PC-9 (cell line): ENCODE measurements at regions of chr22 and their contacts with region 1.

Region 1: GRCh38 chr22:36065775-36066559 is 37.3 kb upstream of the RBFOX2 start:
- DNase-seq: peak; percentile 88 to 95
- H3K4me3 ChIP-seq: peak overlapping the region; percentile 76
- H3K27ac ChIP-seq: peak overlapping the region; percentile 71
- H3K4me1 ChIP-seq: peaks cover 12% of the 10 kb centered on the region
- H3K27me3 ChIP-seq: no peaks in the 10 kb centered on the region
- CTCF ChIP-seq: peak; percentile 100

Region 2: DNA sequence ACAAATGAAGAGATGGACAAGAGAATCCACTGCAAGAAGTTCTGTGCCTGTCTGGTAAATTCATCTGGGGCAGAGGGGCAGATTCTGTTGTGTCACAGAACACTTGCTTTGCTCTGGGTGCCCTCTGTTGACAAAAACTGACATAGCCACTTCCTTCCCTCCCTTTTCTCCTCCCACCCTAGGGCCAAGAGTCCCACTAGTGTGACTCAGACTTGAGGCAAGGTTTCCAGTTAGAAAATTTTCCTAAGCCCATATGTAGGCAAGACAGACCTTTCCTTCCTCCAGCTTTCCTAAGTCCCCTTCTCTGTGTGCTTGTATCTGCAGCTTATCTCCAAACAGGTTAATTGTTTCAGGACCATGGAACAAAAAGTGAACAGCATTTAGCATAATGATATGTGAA is 144.2 kb before region 1 on chr22:
- CTCF ChIA-PET with region 1: interaction called, 11 read pairs
- POLR2A ChIA-PET with region 1: no interaction called
- intact Hi-C with region 1: no loop called
- DNase-seq: peak; percentile 77 to 86
- H3K4me3 ChIP-seq: no peak overlapping the region
- H3K27ac ChIP-seq: peak overlapping the region; percentile 71
- H3K4me1 ChIP-seq: peaks cover 30% of the 10 kb centered on the region
- H3K27me3 ChIP-seq: no peaks in the 10 kb centered on the region
- CTCF ChIP-seq: peak; percentile 72

Region 3: GRCh38 chr22:35930933-35931332 is 135.0 kb before region 1 on chr22:
- CTCF ChIA-PET with region 1: interaction called, 10 read pairs
- POLR2A ChIA-PET with region 1: no interaction called
- intact Hi-C with region 1: loop called (anchors 1 kb)
- DNase-seq: peak; percentile 3 to 48
- H3K4me3 ChIP-seq: no peak overlapping the region
- H3K27ac ChIP-seq: no peak overlapping the region
- H3K4me1 ChIP-seq: no peaks in the 10 kb centered on the region
- H3K27me3 ChIP-seq: no peaks in the 10 kb centered on the region
- CTCF ChIP-seq: peak; percentile 73

Region 4: DNA sequence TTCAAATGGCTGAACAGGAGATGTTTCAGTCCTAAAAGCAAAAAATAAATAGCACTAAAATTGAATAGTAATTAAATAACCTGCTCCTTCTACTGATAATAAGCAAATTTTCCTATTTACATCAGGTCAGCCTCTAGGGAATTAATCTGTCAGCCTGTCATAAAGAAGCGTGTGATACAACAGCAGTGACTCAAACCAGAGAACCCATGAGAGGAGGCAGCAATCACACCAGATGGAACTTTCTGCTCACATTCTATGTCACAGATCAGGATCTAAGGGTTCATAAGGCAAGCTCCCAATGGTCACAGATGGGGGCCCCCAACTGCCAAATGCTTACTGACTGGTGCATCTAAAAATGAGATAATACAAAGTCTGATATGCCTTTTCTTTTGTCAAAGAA is 78.5 kb before region 1 on chr22:
- CTCF ChIA-PET with region 1: interaction called, 5 read pairs
- POLR2A ChIA-PET with region 1: interaction called, 3 read pairs
- intact Hi-C with region 1: loop called (anchors 5 kb)
- DNase-seq: no peak
- H3K4me3 ChIP-seq: no peak overlapping the region
- H3K27ac ChIP-seq: 0 out of 2 replicates have a peak overlapping the region, but pooled peaks have one; percentile 5
- H3K4me1 ChIP-seq: no peaks in the 10 kb centered on the region
- H3K27me3 ChIP-seq: no peaks in the 10 kb centered on the region
- CTCF ChIP-seq: no peak

Region 5: DNA sequence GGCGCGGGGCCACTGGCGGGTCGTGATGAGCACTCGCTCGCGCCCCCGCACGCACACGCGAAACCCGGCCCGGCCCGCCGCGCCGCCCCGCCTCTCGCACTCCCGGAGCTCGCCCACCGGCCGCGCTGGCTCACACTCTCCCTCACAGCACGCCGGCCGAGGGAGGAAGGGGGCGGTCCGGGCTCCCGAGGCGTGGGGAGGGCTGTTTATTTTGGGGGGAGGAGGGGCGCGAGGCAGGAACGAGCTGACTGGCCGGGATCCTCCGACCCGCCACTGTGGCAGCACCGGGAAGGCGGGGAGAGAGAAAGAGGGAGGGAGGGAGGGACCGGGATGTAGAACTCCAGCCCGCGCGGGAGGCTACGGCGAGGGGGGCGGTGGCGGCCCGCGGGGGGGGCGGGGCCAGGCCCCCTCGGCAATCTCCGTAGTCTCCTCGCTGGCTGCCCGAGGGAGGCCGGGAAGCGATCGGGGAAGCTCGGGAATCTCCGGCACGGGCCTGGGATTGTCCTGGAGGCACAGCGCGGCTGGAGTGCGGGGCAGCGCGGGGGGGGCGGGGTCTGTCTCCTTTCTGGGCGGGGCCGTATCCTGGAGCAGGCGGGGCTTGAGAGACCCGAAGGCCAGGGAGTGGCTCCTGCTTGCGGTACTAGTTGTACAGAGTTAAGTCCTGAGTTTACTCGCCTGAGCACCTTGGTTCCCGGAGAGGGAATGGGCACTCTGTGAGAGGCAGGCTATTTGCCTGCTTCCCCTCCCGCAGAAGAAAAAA is 37.1 kb before region 1 on chr22 and contains the start of gene RBFOX2:
- CTCF ChIA-PET with region 1: interaction called, 44 read pairs
- POLR2A ChIA-PET with region 1: interaction called, 18 read pairs
- intact Hi-C with region 1: loop called (anchors 1 kb)
- DNase-seq: peak; percentile 91 to 99
- H3K4me3 ChIP-seq: peak within 1 kb of the TSS; percentile 74
- H3K27ac ChIP-seq: peak within 1 kb of the TSS; percentile 29
- H3K4me1 ChIP-seq: peaks cover 22% of the 10 kb centered on the region
- H3K27me3 ChIP-seq: no peaks in the 10 kb centered on the region
- CTCF ChIP-seq: no peak
- total RNA-seq, gene RBFOX2: 81.7 and 109 TPM in 2 replicates

Region 6: DNA sequence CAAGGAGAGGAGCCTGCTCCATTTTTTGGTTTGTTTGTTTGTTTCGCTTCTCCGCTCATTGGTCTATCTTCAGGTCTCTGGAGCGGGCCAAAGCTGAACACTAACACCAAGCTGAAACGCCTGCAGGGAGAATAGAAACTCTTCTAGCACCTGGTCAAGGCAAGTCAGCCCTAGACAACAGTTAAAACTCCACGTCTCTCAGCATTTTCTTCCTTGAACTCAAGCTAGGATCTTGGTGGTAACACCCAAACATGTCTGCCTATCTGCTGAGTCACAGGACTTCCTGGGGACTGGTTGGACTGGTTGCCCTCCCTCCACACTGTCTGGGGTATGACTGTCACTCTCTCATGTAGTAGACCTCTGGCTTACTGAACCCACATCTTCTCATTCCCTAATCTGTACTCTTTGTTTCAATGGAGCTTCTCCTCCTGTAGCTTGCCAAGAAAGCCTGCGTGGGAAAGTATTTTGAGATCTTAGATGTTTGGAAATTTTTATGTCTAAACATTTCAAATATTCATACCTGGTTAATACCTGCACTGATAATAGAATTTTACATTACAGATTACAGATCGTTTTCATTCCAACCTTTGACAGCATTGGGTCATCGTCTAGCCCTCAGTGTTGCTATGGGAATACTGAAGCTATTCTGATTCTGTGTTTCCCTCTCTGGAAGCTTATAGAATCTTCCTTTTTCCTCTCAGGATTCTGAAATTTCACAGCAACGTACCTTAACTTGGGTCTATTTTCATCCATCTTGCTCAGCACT is 13.3 kb before region 1 on chr22:
- CTCF ChIA-PET with region 1: interaction called, 14 read pairs
- POLR2A ChIA-PET with region 1: interaction called, 8 read pairs
- intact Hi-C with region 1: no loop called
- DNase-seq: peak; percentile 84 to 99
- H3K4me3 ChIP-seq: peak overlapping the region; percentile 52
- H3K27ac ChIP-seq: peak overlapping the region; percentile 99
- H3K4me1 ChIP-seq: peaks cover 92% of the 10 kb centered on the region
- H3K27me3 ChIP-seq: no peaks in the 10 kb centered on the region
- CTCF ChIP-seq: no peak

Region 7: GRCh38 chr22:36102995-36103394 is 37.0 kb after region 1 on chr22:
- CTCF ChIA-PET with region 1: no interaction called
- POLR2A ChIA-PET with region 1: no interaction called
- intact Hi-C with region 1: no loop called
- DNase-seq: no peak
- H3K4me3 ChIP-seq: no peak overlapping the region
- H3K27ac ChIP-seq: no peak overlapping the region
- H3K4me1 ChIP-seq: no peaks in the 10 kb centered on the region
- H3K27me3 ChIP-seq: no peaks in the 10 kb centered on the region
- CTCF ChIP-seq: no peak

Region 8: GRCh38 chr22:36123673-36124630 is 58.0 kb after region 1 on chr22:
- CTCF ChIA-PET with region 1: no interaction called
- POLR2A ChIA-PET with region 1: no interaction called
- intact Hi-C with region 1: loop called (anchors 1 kb)
- DNase-seq: peak; percentile 94 to 97
- H3K4me3 ChIP-seq: peak overlapping the region; percentile 50
- H3K27ac ChIP-seq: peak overlapping the region; percentile 76
- H3K4me1 ChIP-seq: peaks cover 8% of the 10 kb centered on the region
- H3K27me3 ChIP-seq: 0 out of 2 replicates have a peak, but pooled peaks cover 3% of the 10 kb centered on the region
- CTCF ChIP-seq: peak; percentile 99